Activated naive CD4-positive, alpha-beta T cell treated with anti-CD3 and anti-CD28 coated beads for 36 hours (primary cell): ENCODE measurements at regions of chr5 and their contacts with region 1.

Region 1: GRCh38 chr5:82396871-82397514 is 118.8 kb upstream of the RPS23 start:
- DNase-seq: no peak
- H3K4me3 Mint-ChIP-seq: no peak overlapping the region
- H3K27ac Mint-ChIP-seq: no peak overlapping the region
- H3K4me1 Mint-ChIP-seq: no peaks in the 10 kb centered on the region
- H3K27me3 Mint-ChIP-seq: no peaks in the 10 kb centered on the region

Region 2: DNA sequence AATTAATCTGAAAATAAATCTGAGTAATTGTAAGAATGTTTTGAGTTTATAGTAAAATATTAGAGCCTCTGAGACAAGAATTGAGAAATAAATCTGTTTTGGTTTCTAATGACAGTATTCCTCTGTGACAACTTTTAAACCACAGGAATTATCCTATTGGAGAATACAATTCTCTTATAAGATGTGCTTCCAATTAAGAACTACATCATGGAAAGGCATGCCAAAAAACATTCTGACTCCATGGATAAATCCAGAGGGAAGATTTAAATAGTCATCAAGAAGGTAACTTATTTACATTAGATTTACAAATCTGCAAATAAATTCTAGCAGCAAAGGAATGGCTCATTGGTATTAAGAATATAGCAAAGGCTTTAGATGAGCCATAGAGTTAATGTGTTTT is 824.8 kb before region 1 on chr5:
- CTCF ChIA-PET with region 1: no interaction called
- intact Hi-C with region 1: no loop called
- DNase-seq: no peak
- H3K4me3 Mint-ChIP-seq: no peak overlapping the region
- H3K27ac Mint-ChIP-seq: no peak overlapping the region
- H3K4me1 Mint-ChIP-seq: no peaks in the 10 kb centered on the region
- H3K27me3 Mint-ChIP-seq: no peaks in the 10 kb centered on the region

Region 3: DNA sequence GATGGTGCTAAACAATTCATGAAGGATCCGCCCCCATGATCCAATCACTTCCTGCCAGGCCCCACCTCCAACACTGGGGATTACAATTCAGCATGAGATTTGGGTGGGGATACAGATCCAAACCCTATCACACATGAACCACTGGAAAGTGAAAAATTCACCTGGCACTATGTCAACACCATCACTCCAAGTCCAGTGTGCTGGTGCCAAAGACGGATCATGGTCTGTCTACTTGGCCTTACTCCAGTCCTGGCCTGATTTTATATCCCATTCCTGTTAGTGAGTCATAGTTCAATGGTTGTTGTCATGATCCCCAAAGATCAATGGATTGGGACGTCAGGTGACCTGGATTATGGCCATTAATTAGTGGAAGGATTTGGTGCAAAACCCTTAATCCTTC is 28.6 kb after region 1 on chr5:
- CTCF ChIA-PET with region 1: no interaction called
- intact Hi-C with region 1: no loop called
- DNase-seq: no peak
- H3K4me3 Mint-ChIP-seq: no peak overlapping the region
- H3K27ac Mint-ChIP-seq: no peak overlapping the region
- H3K4me1 Mint-ChIP-seq: no peaks in the 10 kb centered on the region
- H3K27me3 Mint-ChIP-seq: no peaks in the 10 kb centered on the region

Region 4: DNA sequence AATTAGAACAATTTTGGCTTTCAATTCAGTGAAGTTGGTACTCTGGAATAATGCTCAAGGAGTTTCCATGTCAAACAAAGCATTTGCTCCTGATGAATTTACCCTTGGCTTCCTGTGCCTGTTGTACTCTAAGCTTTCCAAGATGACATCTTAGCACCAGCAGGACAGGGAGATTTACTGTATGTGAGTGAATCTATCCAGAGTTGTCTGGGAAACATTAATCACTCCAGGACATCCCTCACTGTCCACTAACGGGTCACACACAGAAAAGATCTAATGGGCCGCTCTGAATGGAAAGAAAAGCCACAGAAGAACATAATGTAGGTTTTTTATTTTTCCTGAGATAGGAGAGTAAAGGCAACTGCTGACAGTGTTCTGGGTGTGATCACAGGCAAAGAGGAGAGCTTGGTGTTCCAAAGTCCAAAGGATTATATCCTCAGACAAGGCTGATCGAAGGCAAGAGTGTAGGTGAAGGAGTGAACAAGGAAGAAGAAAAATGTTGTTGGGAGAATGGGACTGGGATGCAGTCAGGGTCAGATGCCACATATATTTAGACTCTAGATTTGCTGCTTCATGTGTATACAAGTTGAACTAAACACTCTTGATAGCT is 48.8 kb after region 1 on chr5:
- CTCF ChIA-PET with region 1: no interaction called
- intact Hi-C with region 1: loop called (anchors 1 kb)
- DNase-seq: no peak
- H3K4me3 Mint-ChIP-seq: no peak overlapping the region
- H3K27ac Mint-ChIP-seq: no peak overlapping the region
- H3K4me1 Mint-ChIP-seq: no peaks in the 10 kb centered on the region
- H3K27me3 Mint-ChIP-seq: peaks cover 6% of the 10 kb centered on the region